ENCODE measurements at regions of chr2 and their contacts with region 1.

Region 1: DNA sequence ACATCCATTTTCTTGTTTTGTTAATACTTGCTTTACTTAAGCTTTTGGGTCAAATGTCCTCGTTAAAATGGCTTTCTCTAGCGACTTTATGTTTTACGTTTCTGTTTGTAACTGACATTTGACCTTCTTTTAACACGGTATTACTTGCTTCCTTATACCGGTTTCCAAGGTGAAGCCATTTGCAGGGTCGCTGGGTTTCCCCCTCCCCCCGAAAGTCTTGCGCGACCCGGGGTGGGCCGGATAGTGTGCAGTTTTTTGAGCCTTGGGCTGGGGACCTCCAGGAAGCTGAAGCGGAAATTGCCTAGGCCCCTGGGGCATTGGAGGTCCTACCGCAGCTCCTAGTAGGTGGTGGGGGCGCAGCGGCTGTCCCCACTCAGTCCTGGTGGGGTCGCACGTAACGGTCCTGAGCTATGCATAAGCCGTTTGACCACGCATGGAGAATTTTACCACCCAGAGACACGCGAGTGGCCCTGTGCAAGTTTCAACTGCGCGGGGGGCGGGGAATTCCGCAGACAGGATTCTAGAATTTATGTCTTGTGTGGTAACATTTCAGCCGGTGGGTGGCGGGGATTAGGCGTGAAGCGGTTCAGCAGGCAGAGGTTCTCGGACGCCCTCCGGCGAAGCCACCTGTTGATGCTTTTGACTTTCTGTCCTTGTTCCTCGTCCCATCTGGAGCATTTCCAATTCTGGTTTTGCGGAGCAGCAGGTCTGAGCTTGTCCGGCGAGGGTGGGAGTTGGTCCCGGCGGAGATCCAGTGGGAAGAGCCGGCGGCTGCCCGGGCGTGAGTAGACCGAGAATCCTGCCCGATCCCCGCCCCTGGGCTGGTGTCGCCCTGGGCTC is 2.4 kb downstream of the CFLAR start:
- DNase-seq: peak; percentile 91
- H3K4me3 ChIP-seq: peak overlapping the region; percentile 76
- H3K27ac ChIP-seq: peak overlapping the region; percentile 98
- H3K4me1 ChIP-seq: peaks cover 23% of the 10 kb centered on the region
- H3K27me3 ChIP-seq: no peaks in the 10 kb centered on the region
- CTCF ChIP-seq: peak; percentile 59

Region 2: DNA sequence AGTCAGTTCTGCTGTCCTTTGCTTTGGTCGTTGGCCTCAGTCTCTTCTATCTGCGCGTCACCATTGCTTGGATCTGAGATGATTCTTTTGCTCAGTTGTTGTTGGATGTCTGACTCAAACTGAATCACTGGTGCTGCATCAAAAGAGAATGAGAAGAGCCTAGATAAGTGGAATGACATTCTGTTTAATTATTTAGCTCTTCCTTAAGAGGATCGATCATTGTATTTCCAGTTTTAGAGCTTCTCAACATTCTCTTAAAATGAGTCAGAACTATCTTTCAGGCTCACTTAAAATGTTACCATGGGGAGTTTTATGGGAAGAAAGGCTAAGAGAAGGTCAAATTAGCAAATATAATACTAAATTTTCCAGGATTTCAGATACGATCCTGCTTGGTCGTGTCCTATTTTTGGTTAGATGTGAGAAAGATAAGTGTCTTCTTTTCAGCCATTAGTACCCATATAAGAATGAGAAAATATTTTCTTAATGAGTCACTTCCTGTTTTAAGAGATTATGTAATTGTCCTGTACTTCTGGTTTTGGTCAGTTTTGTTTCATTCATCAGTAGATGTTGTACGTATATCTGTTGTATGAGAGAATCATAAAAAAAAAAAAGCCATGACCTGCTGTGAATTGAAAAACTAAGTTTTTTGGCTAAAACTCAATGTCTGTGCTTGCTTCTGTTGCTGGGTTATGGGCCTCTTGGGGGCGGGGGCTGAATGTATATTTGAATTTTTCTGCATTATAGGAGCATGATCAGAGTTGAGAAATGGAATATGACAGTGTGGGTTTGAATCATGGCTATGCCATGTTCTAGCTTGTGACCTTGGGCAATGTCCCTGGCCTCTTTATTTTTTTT is 33.0 kb after region 1 on chr2:
- CTCF ChIA-PET with region 1: no interaction called
- POLR2A ChIA-PET with region 1: no interaction called
- intact Hi-C with region 1: loop called (anchors 2 kb)
- DNase-seq: peak; percentile 87
- H3K4me3 ChIP-seq: peak overlapping the region; percentile 17
- H3K27ac ChIP-seq: peak overlapping the region; percentile 76
- H3K4me1 ChIP-seq: peaks cover 36% of the 10 kb centered on the region
- H3K27me3 ChIP-seq: no peaks in the 10 kb centered on the region
- CTCF ChIP-seq: no peak

Region 3: GRCh38 chr2:202592566-202592965 is 1474.2 kb after region 1 on chr2:
- CTCF ChIA-PET with region 1: no interaction called
- POLR2A ChIA-PET with region 1: no interaction called
- intact Hi-C with region 1: no loop called
- DNase-seq: no peak
- H3K4me3 ChIP-seq: no peak overlapping the region
- H3K27ac ChIP-seq: no peak overlapping the region
- H3K4me1 ChIP-seq: peaks cover 5% of the 10 kb centered on the region
- H3K27me3 ChIP-seq: no peaks in the 10 kb centered on the region
- CTCF ChIP-seq: no peak